Activated naive CD4-positive, alpha-beta T cell treated with anti-CD3 and anti-CD28 coated beads for 36 hours (primary cell): ENCODE measurements at regions of chr2 and their contacts with region 1.

Region 1: GRCh38 chr2:200471324-200471848 is 38.5 kb downstream of the KCTD18 start:
- DNase-seq: peak; percentile 59
- H3K4me3 Mint-ChIP-seq: no peak overlapping the region
- H3K27ac Mint-ChIP-seq: no peak overlapping the region
- H3K4me1 Mint-ChIP-seq: peaks cover 38% of the 10 kb centered on the region
- H3K27me3 Mint-ChIP-seq: no peaks in the 10 kb centered on the region

Region 2: DNA sequence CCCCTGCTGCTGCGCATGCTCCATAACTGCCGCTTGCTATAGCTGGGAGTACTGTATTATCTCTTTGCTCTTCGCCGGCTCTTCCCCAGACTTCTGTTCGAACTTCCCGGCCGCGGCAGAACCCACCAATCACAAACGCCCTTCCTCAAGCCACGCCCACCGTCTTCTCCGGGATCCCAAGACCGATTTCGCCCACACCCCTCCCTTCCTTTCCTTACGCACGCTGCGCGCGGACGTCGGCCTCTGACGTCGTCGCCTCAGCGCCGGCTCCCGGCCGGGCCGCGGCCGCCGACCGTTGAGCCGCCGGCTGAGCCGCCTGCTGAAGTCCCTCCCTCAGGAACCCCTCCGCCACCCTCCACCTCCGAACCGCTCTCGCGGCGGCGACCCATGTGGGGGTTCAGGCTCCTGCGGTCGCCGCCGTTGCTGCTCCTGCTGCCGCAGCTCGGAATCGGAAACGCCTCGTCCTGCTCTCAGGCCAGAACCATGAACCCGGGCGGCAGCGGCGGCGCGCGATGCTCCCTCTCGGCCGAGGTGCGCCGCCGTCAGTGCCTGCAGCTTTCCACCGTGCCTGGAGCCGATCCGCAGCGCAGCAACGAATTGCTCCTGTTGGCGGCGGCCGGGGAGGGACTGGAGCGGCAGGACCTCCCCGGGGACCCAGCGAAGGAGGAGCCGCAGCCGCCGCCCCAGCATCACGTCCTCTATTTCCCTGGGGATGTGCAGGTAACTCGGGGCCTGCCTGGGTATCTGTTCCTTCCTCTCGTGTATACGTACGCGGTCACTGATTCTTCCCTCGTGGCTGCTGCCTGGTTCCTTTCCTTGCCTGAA is 560.1 kb before region 1 on chr2 and contains the start of gene C2orf69:
- CTCF ChIA-PET with region 1: no interaction called
- intact Hi-C with region 1: loop called (anchors 2 kb)
- DNase-seq: peak; percentile 98
- H3K4me3 Mint-ChIP-seq: peak within 1 kb of the TSS; percentile 96
- H3K27ac Mint-ChIP-seq: peak within 1 kb of the TSS; percentile 91
- H3K4me1 Mint-ChIP-seq: peaks cover 24% of the 10 kb centered on the region
- H3K27me3 Mint-ChIP-seq: peaks cover 2% of the 10 kb centered on the region
- total RNA-seq, gene C2orf69: 18.5 to 20.6 TPM

Region 3: GRCh38 chr2:200230716-200231115 is 240.7 kb before region 1 on chr2:
- CTCF ChIA-PET with region 1: no interaction called
- intact Hi-C with region 1: loop called (anchors 5 kb)
- DNase-seq: no peak
- H3K4me3 Mint-ChIP-seq: no peak overlapping the region
- H3K27ac Mint-ChIP-seq: no peak overlapping the region
- H3K4me1 Mint-ChIP-seq: no peaks in the 10 kb centered on the region
- H3K27me3 Mint-ChIP-seq: peaks cover 8% of the 10 kb centered on the region

Region 4: DNA sequence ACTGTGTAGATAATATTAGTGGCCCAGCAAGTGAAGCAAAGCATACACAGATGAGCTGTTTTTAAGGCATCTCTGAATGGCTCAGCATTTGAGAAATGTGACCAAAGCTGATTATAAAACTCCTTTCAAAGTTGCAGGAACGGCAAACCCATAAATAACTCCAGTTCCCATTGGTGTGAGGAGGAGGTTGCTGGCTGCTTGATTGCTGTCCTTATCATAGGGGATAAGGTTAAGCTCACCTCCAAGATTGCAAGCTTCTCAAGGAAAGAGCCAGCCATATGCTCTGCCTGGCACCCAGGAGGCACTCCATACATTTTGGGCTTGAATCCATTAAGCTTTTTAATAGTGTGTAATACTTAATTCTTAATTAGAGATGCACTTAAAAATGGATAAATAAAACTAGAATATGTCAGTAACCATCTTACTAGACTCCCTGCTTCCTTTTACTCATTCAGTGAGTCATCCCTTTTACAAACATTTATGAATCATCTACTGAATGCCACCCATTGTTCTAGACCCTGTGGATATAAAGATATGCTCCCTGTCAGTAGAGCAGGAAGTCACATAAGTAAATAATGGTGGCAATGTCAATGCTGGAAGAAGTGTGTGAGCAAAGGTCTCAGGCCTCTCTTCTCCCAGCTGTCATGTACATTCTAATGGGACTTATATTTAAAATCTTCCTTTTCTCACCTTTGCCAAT is 65.6 kb before region 1 on chr2:
- CTCF ChIA-PET with region 1: no interaction called
- intact Hi-C with region 1: loop called (anchors 1 kb)
- DNase-seq: no peak
- H3K4me3 Mint-ChIP-seq: no peak overlapping the region
- H3K27ac Mint-ChIP-seq: peak overlapping the region; percentile 59
- H3K4me1 Mint-ChIP-seq: peaks cover 29% of the 10 kb centered on the region
- H3K27me3 Mint-ChIP-seq: no peaks in the 10 kb centered on the region

Region 5: GRCh38 chr2:200483729-200484198 is 12.4 kb after region 1 on chr2:
- CTCF ChIA-PET with region 1: interaction called, 23 read pairs
- intact Hi-C with region 1: no loop called
- DNase-seq: peak; percentile 67
- H3K4me3 Mint-ChIP-seq: no peak overlapping the region
- H3K27ac Mint-ChIP-seq: no peak overlapping the region
- H3K4me1 Mint-ChIP-seq: peaks cover 2% of the 10 kb centered on the region
- H3K27me3 Mint-ChIP-seq: no peaks in the 10 kb centered on the region

Region 6: GRCh38 chr2:200703127-200703925 is 231.9 kb after region 1 on chr2:
- CTCF ChIA-PET with region 1: interaction called, 3 read pairs
- intact Hi-C with region 1: loop called (anchors 1 kb)
- DNase-seq: peak; percentile 68
- H3K4me3 Mint-ChIP-seq: peak overlapping the region; percentile 19
- H3K27ac Mint-ChIP-seq: peak overlapping the region; percentile 83
- H3K4me1 Mint-ChIP-seq: peaks cover 55% of the 10 kb centered on the region
- H3K27me3 Mint-ChIP-seq: peaks cover 1% of the 10 kb centered on the region